ENCODE measurements at regions of chr7 and their contacts with region 1.

Region 1: DNA sequence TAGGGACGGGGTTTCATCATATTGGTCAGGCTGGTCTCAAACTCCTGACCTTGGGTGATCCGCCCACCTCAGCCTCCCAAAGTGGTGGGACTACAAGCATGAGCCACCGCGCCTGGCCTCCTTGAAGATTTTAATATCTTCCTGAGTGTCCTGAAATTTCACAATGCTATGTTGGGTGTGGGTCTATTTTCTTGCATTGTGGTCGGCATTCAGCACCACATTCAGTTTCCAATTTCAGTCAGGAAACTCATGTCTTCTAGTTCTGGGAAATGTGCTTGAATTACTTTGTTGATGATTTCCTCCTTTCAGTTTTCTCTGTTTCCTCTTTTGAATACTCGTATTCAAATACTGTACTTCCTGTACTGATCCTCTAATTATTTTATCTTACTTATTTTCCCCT is 49.3 kb upstream of the IL6 start:
- DNase-seq: peak; percentile 6
- H3K4me3 ChIP-seq: no peak overlapping the region
- H3K27ac ChIP-seq: no peak overlapping the region
- H3K4me1 ChIP-seq: peaks cover 5% of the 10 kb centered on the region
- CTCF ChIP-seq: no peak

Region 2: GRCh38 chr7:22718911-22719420 is 41.3 kb after region 1 on chr7:
- CTCF ChIA-PET with region 1: no interaction called
- POLR2A ChIA-PET with region 1: interaction called, 10 read pairs
- intact Hi-C with region 1: no loop called
- DNase-seq: no peak
- H3K4me3 ChIP-seq: no peak overlapping the region
- H3K27ac ChIP-seq: no peak overlapping the region
- H3K4me1 ChIP-seq: peaks cover 3% of the 10 kb centered on the region
- CTCF ChIP-seq: no peak

Region 3: GRCh38 chr7:23373151-23374004 is 695.7 kb after region 1 on chr7:
- CTCF ChIA-PET with region 1: no interaction called
- POLR2A ChIA-PET with region 1: no interaction called
- intact Hi-C with region 1: no loop called
- DNase-seq: peak; percentile 92
- H3K4me3 ChIP-seq: peak overlapping the region; percentile 51
- H3K27ac ChIP-seq: peak overlapping the region; percentile 94
- H3K4me1 ChIP-seq: peaks cover 75% of the 10 kb centered on the region
- CTCF ChIP-seq: no peak